Esophagus squamous epithelium (tissue), 5 donors: ENCODE measurements at regions of chr15 and their contacts with region 1.

Region 1: DNA sequence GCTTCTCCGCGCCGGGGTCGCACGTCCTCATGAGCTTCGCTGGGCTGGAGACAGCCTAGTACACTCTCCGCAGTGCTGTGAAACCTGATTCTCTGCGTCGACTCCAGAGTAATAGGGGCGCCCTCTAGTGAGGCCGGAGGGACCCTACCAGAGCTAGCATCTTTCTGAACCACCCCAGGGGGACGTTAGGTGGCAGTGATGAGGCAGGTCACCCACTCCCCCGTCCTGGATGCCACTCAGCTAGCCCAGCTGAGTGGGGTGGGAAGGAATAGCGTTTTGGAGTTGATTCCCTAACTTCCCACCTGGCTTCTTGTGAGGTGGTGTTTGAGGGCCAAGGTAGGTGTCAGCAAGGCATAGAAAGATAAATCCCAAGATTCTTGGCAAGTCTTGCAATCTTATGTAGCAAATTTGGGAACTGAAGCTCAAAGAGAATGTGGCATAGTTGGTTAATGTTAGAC is 4.0 kb downstream of the DUOXA2 start:
- DNase-seq: peak; percentile 36
- H3K4me3 ChIP-seq: peak overlapping the region in 2 of 4 donors; percentile 21 to 45
- H3K27ac ChIP-seq: no peak overlapping the region
- H3K4me1 ChIP-seq: peaks cover 0 to 67% (median 32%) of the 10 kb centered on the region in 3 donors
- H3K27me3 ChIP-seq: peaks cover 8 to 96% (median 16%) of the 10 kb centered on the region in 4 donors
- CTCF ChIP-seq: peak; percentile 82 to 95 (median 88)
- POLR2A ChIP-seq: no peak

Region 2: GRCh38 chr15:44971036-44971435 is 147.1 kb before region 1 on chr15:
- intact Hi-C with region 1: loop called (anchors 5 kb)
- DNase-seq: no peak
- H3K4me3 ChIP-seq: no peak overlapping the region
- H3K27ac ChIP-seq: no peak overlapping the region
- H3K4me1 ChIP-seq: no peaks in the 10 kb centered on the region
- H3K27me3 ChIP-seq: no peaks in the 10 kb centered on the region
- CTCF ChIP-seq: no peak
- POLR2A ChIP-seq: no peak

Region 3: DNA sequence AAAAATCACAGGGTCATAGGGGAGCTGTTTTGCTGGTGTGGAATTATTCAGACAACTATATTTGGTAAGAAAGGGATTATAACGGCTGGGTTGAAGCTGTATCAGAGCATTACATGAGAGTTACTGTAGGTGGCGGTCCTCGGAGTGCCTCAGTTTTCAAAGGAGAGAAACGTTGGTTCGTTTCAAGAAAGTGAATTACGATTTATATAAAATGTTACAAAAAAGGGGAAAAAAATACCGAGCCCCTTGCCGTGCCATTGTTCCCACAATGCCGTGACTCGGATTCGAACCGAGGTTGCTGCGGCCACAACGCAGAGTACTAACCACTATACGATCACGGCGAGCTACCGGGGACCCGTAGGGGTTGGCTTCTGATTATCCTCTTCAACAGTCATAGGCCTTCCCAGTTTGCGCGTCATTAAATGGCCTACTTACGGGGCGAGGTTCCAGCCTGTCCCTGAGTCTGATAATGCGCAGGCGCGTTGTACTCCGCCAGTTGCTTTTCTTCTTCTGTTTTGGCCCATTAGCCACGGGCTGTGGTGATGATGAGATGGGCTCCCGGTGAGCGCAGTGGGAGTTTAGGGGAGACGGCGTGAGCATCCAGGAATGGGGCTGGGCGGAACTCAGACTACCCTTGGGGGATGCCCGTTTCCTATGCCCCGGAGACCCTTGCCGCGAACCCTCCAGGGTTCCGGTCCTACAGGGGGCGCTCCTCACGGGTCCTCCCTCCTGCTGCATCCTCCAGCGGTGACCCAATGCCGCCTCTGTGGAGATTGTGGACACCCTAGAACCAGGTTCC is 80.4 kb after region 1 on chr15:
- intact Hi-C with region 1: no loop called
- DNase-seq: peak; percentile 78
- H3K4me3 ChIP-seq: peak overlapping the region; percentile 36 to 87 (median 68)
- H3K27ac ChIP-seq: peak overlapping the region; percentile 85 to 100 (median 98)
- H3K4me1 ChIP-seq: peaks cover 0 to 37% (median 6%) of the 10 kb centered on the region in 3 donors
- H3K27me3 ChIP-seq: no peaks in the 10 kb centered on the region
- CTCF ChIP-seq: peak; percentile 53 to 79 (median 69)
- POLR2A ChIP-seq: peak in 3 of 4 donors; percentile 64 to 96 (median 94)

Region 4: GRCh38 chr15:45307230-45307924 is 189.2 kb after region 1 on chr15:
- intact Hi-C with region 1: no loop called
- DNase-seq: no peak
- H3K4me3 ChIP-seq: peak overlapping the region in 1 of 4 donors; percentile 52
- H3K27ac ChIP-seq: peak overlapping the region in 1 of 4 donors; percentile 28
- H3K4me1 ChIP-seq: peaks cover 0 to 11% (median 4%) of the 10 kb centered on the region in 3 donors
- H3K27me3 ChIP-seq: peaks cover 0 to 11% (median 0%) of the 10 kb centered on the region in 4 donors
- CTCF ChIP-seq: peak in 5 of 6 experiments; percentile 52 to 69 (median 58)
- POLR2A ChIP-seq: no peak

Region 5: GRCh38 chr15:45338417-45338816 is 220.3 kb after region 1 on chr15:
- intact Hi-C with region 1: no loop called
- DNase-seq: no peak
- H3K4me3 ChIP-seq: no peak overlapping the region
- H3K27ac ChIP-seq: no peak overlapping the region
- H3K4me1 ChIP-seq: peaks cover 0 to 11% (median 0%) of the 10 kb centered on the region in 3 donors
- H3K27me3 ChIP-seq: no peaks in the 10 kb centered on the region
- CTCF ChIP-seq: no peak
- POLR2A ChIP-seq: no peak

Region 6: GRCh38 chr15:45391746-45392583 is 273.8 kb after region 1 on chr15:
- intact Hi-C with region 1: no loop called
- DNase-seq: no peak
- H3K4me3 ChIP-seq: no peak overlapping the region
- H3K27ac ChIP-seq: peak overlapping the region in 1 of 4 donors; percentile 8
- H3K4me1 ChIP-seq: peaks cover 0 to 16% (median 0%) of the 10 kb centered on the region in 3 donors
- H3K27me3 ChIP-seq: peaks cover 0 to 14% (median 0%) of the 10 kb centered on the region in 4 donors
- CTCF ChIP-seq: no peak
- POLR2A ChIP-seq: no peak